Left lung (tissue), 14 donors: ENCODE measurements at regions of chr15 and their contacts with region 1.

Region 1: DNA sequence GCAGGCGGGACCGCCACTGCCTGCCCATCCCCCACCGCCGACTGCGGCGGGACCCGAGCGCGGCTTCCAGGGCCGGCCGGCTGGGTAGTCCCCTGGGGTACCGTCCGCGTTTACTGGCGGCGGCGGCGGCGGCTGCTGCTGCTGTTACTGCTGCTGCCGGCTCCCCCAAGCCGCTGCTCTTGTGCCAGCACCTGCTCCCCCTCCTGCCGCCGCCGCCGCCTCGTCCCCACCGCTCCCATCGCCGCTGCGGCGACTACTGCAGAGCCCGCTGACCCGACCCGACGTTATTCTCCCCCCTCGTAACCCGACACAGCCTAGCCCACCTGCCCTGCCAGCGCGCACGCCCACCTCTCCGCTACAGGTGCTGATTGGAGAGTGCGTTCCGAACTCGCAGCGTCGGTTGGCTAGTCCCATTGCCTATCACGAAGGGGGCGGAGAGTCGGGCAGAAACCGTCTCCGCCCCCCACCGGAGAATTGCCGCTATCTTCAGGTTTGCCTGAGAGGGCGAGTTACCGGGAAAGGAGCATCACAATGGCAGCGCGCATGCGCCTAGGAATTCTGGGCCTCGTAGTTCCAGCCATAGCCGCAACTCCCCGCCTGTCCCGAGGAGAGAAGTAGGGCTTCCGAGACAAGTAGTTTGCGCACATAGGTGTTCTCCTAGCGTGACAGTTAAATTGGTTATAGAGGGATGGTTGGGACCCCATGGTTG is at the start of gene TTBK2:
- DNase-seq: peak; percentile 97 to 99 (median 98)
- ATAC-seq: peak; percentile 99
- H3K4me3 ChIP-seq: peak within 1 kb of the TSS; percentile 91 to 97
- H3K27ac ChIP-seq: peak within 1 kb of the TSS; percentile 83 to 87
- H3K4me1 ChIP-seq: peaks cover 8 to 27% of the 10 kb centered on the region in 2 donors
- H3K27me3 ChIP-seq: no peaks in the 10 kb centered on the region
- CTCF ChIP-seq: peak in 1 of 2 donors; percentile 36
- polyA plus RNA-seq, gene TTBK2: 12.4 to 15.8 (median 13.8) TPM

Region 2: GRCh38 chr15:42591238-42591934 is 329.3 kb before region 1 on chr15:
- intact Hi-C with region 1: no loop called
- DNase-seq: no peak
- ATAC-seq: peak; percentile 77
- H3K4me3 ChIP-seq: no peak overlapping the region
- H3K27ac ChIP-seq: no peak overlapping the region
- H3K4me1 ChIP-seq: peaks cover 0 to 4% of the 10 kb centered on the region in 2 donors
- H3K27me3 ChIP-seq: no peaks in the 10 kb centered on the region
- CTCF ChIP-seq: peak; percentile 30 to 36

Region 3: DNA sequence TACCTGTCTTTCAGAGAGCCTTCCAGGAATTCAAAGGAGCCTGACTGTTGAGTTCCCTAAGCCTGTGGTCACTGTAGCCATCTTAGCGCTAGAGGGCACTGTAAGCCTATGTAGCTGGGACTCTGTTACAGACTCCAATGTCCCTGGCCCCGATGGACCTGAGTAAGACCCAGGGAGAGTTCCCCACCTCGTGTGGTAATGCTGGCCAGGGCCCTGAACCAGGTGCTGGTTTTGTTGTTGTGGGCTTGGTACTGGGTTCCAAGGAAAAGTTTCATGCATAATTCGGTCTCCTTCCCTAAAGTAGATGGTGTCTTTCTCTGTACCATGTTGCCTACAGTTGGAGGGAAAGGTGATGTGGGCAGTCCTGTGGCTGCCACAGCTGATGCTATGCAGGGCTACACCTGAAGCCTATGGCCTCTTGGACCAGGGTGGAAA is 216.2 kb before region 1 on chr15:
- intact Hi-C with region 1: loop called in 1 of 2 experiments (anchors 10 kb)
- DNase-seq: peak in 3 of 4 donors; percentile 42 to 71 (median 47)
- ATAC-seq: peak; percentile 99
- H3K4me3 ChIP-seq: no peak overlapping the region
- H3K27ac ChIP-seq: no peak overlapping the region
- H3K4me1 ChIP-seq: peaks cover 0 to 13% of the 10 kb centered on the region in 2 donors
- H3K27me3 ChIP-seq: no peaks in the 10 kb centered on the region
- CTCF ChIP-seq: peak; percentile 66 to 81

Region 4: DNA sequence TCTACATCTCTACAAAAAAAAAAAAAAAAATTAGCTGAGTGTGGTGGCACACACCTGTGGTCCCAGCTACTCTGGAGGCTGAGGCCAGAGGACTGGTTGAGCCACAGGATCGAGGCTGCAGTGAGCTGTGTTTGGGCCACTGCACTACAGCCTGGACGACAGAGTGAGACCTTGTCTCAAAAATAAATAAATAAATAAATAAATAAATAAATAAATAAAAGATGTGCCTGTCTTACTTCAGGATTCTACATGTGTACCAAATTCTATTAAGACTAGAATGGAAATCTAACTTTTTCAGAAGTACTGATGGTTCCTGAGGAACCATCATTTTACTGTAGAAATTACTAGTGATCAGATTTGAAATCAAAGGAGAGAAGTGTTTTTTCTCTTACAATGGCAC is 52.0 kb before region 1 on chr15:
- intact Hi-C with region 1: no loop called
- DNase-seq: no peak
- ATAC-seq: no peak
- H3K4me3 ChIP-seq: no peak overlapping the region
- H3K27ac ChIP-seq: no peak overlapping the region
- H3K4me1 ChIP-seq: no peaks in the 10 kb centered on the region
- H3K27me3 ChIP-seq: no peaks in the 10 kb centered on the region
- CTCF ChIP-seq: no peak